Activated B cell treated with CpG ODN at 0.5 μM for 24 hours (primary cell): ENCODE measurements at regions of chr7 and their contacts with region 1.

Region 1: DNA sequence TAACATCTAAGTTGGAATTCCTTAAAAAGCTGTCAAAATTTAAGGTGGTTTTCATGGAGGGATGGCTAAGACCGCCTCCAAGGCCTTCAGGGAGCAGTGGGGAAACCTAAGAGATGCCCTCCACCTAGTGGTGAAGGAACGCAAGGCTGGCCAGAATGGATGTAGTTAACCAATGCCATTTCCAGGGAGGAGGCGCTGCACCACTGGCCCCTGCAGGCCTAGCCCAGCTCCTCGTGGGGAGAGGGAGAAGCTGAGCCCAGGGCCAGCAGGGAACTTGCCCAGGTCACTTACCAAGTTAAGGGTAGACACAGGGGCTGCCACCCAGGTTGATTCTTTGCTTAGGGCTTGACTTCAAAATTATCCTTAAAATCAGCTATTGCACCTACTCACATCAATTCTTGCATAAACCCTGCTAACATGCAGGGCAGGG is 32.0 kb downstream of the FIGNL1 start:
- DNase-seq: peak; percentile 47
- ATAC-seq: peak; percentile 82
- H3K4me3 Mint-ChIP-seq: no peak overlapping the region
- H3K27ac Mint-ChIP-seq: peak overlapping the region; percentile 35
- H3K4me1 Mint-ChIP-seq: peaks cover 51% of the 10 kb centered on the region
- H3K27me3 Mint-ChIP-seq: no peaks in the 10 kb centered on the region
- CTCF ChIP-seq: peak; percentile 56

Region 2: GRCh38 chr7:50068961-50069551 is 349.0 kb before region 1 on chr7:
- CTCF ChIA-PET with region 1: no interaction called
- POLR2A ChIA-PET with region 1: no interaction called
- intact Hi-C with region 1: no loop called
- DNase-seq: no peak
- ATAC-seq: peak; percentile 62
- H3K4me3 Mint-ChIP-seq: peak overlapping the region; percentile 81
- H3K27ac Mint-ChIP-seq: peak overlapping the region; percentile 91
- H3K4me1 Mint-ChIP-seq: peaks cover 21% of the 10 kb centered on the region
- H3K27me3 Mint-ChIP-seq: peaks cover 5% of the 10 kb centered on the region
- CTCF ChIP-seq: no peak

Region 3: DNA sequence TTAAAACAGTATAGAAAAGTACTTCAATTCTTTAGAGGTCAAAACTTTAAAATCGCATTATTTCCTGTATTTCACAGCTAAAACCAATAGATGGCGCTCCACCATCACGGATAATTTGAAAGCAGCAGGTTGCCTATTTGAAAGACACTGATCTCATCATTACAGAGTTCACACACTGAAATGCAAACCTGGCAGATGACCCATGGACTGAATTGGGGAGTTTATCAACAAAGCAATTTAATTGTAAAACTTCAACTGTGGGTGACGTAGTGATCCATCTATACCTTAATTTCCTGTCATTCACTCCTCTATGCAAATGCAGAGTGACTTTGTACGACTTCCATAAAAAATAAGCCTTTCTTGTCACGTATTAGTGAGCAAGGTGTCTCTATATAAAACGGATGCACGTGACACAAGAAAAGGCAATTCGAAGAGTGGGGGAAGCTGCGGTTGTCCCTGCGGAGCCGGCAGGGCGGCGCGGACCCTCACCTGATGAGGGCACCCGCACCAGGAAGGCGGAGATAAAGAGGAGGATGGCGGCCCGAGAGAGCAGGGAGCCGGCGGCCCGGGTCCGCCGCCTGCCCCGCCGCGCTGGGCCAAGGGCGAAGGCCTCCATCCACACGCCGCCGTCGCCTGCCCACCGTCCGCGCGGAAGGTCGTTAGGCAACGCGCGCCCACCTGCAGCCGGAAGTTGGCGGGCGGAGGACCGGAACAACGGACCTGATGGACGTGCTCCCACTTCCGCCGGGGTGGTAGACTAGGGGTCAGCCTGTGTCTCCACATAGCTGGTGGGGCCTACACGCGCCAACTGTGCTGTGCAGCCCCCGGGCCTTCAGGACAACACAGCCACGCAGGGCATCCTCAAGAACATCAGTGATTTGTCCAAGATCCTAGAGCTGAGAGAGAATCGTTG is 325.3 kb before region 1 on chr7 and contains the start of gene ZPBP:
- CTCF ChIA-PET with region 1: interaction called, 27 read pairs
- POLR2A ChIA-PET with region 1: no interaction called
- intact Hi-C with region 1: loop called (anchors 1 kb)
- DNase-seq: peak; percentile 40
- ATAC-seq: peak; percentile 79
- H3K4me3 Mint-ChIP-seq: peak within 1 kb of the TSS; percentile 88
- H3K27ac Mint-ChIP-seq: peak within 1 kb of the TSS; percentile 81
- H3K4me1 Mint-ChIP-seq: peaks cover 8% of the 10 kb centered on the region
- H3K27me3 Mint-ChIP-seq: peaks cover 2% of the 10 kb centered on the region
- CTCF ChIP-seq: peak; percentile 61
- total RNA-seq, gene ZPBP: not detected in 2 replicates

Region 4: GRCh38 chr7:50142425-50143017 is 275.6 kb before region 1 on chr7:
- CTCF ChIA-PET with region 1: interaction called, 16 read pairs
- POLR2A ChIA-PET with region 1: interaction called, 25 read pairs
- intact Hi-C with region 1: loop called (anchors 1 kb)
- DNase-seq: no peak
- ATAC-seq: peak; percentile 62
- H3K4me3 Mint-ChIP-seq: peak overlapping the region; percentile 72
- H3K27ac Mint-ChIP-seq: peak overlapping the region; percentile 86
- H3K4me1 Mint-ChIP-seq: peaks cover 58% of the 10 kb centered on the region
- H3K27me3 Mint-ChIP-seq: no peaks in the 10 kb centered on the region
- CTCF ChIP-seq: no peak

Region 5: DNA sequence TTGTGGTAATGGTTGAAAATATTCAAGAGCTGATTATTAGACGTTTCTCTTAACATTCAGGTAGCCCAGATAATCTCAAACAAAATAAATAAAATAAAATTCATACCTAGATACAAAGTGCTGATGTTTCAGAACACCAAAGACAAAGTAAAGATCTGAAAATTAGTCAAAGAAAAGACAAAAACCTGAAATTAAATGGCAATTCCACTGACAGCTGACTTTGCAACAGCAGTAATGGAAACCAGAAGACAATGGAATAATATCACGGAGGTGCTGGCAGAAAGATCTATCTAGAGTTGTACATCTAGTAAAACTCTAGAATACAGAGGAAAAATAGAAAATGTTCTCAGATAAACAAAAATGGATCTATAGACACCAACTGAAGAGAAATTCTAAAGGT is 171.6 kb before region 1 on chr7:
- CTCF ChIA-PET with region 1: no interaction called
- POLR2A ChIA-PET with region 1: no interaction called
- intact Hi-C with region 1: no loop called
- DNase-seq: no peak
- ATAC-seq: no peak
- H3K4me3 Mint-ChIP-seq: no peak overlapping the region
- H3K27ac Mint-ChIP-seq: no peak overlapping the region
- H3K4me1 Mint-ChIP-seq: peaks cover 5% of the 10 kb centered on the region
- H3K27me3 Mint-ChIP-seq: no peaks in the 10 kb centered on the region
- CTCF ChIP-seq: no peak

Region 6: DNA sequence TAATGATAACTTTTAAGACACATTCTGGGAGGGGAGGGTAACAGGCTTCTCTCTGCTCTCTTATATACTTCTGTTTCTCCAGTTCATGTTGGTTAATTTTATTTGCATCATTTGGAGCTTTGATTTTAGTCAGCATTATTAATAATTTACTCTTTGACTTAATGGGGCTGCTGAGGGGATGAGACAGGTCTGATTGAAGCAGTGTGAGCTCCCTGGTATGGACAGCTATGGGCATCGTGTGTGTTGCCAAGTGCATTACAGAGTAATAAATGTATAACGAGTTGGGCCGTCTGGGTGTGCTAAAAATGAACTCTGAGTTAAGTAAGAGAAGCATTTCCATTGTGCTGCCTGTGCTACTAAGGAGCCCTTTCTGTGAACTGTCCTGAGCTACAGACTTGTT is 145.3 kb before region 1 on chr7:
- CTCF ChIA-PET with region 1: interaction called, 9 read pairs
- POLR2A ChIA-PET with region 1: interaction called, 4 read pairs
- intact Hi-C with region 1: loop called (anchors 1 kb)
- DNase-seq: no peak
- ATAC-seq: peak; percentile 43
- H3K4me3 Mint-ChIP-seq: peak overlapping the region; percentile 12
- H3K27ac Mint-ChIP-seq: peak overlapping the region; percentile 82
- H3K4me1 Mint-ChIP-seq: peaks cover 99% of the 10 kb centered on the region
- H3K27me3 Mint-ChIP-seq: no peaks in the 10 kb centered on the region
- CTCF ChIP-seq: no peak

Region 7: DNA sequence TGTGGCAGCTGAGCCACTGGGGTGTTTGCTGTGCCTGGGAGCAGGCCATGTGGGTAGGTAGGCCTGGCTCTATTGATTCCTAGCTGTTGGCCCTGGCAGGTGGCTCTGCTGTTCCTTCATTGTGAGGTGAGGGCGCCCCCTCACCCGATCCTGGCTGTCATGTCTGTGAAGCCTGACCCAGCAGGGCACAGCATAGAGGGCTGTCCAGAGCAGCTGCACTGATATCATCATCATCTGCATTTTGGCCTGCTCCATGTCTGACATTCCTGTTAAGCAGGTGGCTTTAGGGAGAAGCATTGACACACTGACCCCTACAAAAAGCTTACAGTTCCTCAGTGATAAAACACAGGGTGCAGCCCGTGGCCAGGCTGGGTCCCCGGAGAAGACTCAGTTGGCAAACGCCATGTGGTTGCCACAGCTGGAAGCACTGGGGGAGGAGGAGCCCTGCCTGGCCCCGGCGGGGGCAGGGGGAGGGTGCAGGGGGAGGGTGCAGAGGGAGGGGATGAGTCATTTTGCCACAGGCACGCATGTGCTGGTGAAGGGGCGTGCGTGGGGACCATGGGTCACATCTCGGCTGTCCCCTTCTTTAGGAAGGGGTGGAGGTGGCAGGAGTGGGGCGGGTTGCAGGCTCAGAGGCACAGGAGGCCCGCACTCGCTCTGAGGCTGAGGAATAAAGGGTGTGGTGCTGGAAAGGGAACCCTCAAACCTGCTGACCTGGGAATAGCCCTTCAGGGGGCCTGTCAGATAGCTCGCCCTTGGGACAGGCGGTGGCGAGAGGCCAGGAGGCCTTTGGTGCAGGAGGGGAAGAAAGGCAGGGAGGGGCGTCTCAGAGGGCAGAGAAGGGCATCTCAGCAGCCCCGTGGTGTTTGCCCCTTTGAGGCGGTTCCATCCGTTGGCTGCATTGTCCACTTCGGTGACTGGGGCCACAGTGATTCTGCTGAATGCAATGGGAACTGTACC is 82.0 kb before region 1 on chr7:
- CTCF ChIA-PET with region 1: interaction called, 11 read pairs
- POLR2A ChIA-PET with region 1: no interaction called
- intact Hi-C with region 1: no loop called
- DNase-seq: peak; percentile 69
- ATAC-seq: peak; percentile 63
- H3K4me3 Mint-ChIP-seq: peak overlapping the region; percentile 74
- H3K27ac Mint-ChIP-seq: no peak overlapping the region
- H3K4me1 Mint-ChIP-seq: peaks cover 2% of the 10 kb centered on the region
- H3K27me3 Mint-ChIP-seq: no peaks in the 10 kb centered on the region
- CTCF ChIP-seq: no peak

Region 8: GRCh38 chr7:50379082-50379481 is 39.0 kb before region 1 on chr7:
- CTCF ChIA-PET with region 1: interaction called, 11 read pairs
- POLR2A ChIA-PET with region 1: interaction called, 3 read pairs
- intact Hi-C with region 1: loop called (anchors 1 kb)
- DNase-seq: no peak
- ATAC-seq: no peak
- H3K4me3 Mint-ChIP-seq: no peak overlapping the region
- H3K27ac Mint-ChIP-seq: peak overlapping the region; percentile 71
- H3K4me1 Mint-ChIP-seq: peaks cover 84% of the 10 kb centered on the region
- H3K27me3 Mint-ChIP-seq: no peaks in the 10 kb centered on the region
- CTCF ChIP-seq: no peak

Region 9: DNA sequence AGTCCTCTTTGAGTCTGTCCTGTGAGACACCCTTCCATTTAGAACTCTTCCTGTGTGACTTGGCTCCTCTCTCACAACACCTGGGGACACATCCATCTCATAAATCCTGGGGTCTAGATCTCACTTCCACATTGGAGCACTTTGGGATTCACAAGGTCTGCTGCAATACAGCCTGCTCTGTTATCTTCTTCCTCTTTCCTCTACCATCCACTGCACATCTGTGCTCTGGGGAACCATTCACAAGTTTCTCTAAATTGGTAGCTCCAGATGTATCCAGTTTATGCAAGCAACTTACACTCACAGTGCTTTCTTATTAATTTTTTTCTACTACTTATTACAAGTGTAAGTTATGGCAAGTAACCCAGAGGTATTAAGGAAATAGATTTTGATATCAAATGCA is 37.6 kb after region 1 on chr7:
- CTCF ChIA-PET with region 1: no interaction called
- POLR2A ChIA-PET with region 1: no interaction called
- intact Hi-C with region 1: no loop called
- DNase-seq: no peak
- ATAC-seq: no peak
- H3K4me3 Mint-ChIP-seq: no peak overlapping the region
- H3K27ac Mint-ChIP-seq: no peak overlapping the region
- H3K4me1 Mint-ChIP-seq: peaks cover 7% of the 10 kb centered on the region
- H3K27me3 Mint-ChIP-seq: no peaks in the 10 kb centered on the region
- CTCF ChIP-seq: no peak

Region 10: GRCh38 chr7:51162724-51163329 is 744.7 kb after region 1 on chr7:
- CTCF ChIA-PET with region 1: interaction called, 3 read pairs
- POLR2A ChIA-PET with region 1: no interaction called
- intact Hi-C with region 1: loop called (anchors 2 kb)
- DNase-seq: peak; percentile 18
- ATAC-seq: peak; percentile 77
- H3K4me3 Mint-ChIP-seq: no peak overlapping the region
- H3K27ac Mint-ChIP-seq: no peak overlapping the region
- H3K4me1 Mint-ChIP-seq: peaks cover 7% of the 10 kb centered on the region
- H3K27me3 Mint-ChIP-seq: peaks cover 10% of the 10 kb centered on the region
- CTCF ChIP-seq: peak; percentile 20